CD4-positive, alpha-beta T cell (primary cell): ENCODE measurements at regions of chr19 and their contacts with region 1.

Region 1: GRCh38 chr19:28466107-28467045 is 746.6 kb downstream of the UQCRFS1 start:
- DNase-seq: peak; percentile 28 to 74 (median 49)
- ATAC-seq: no peak
- H3K4me3 ChIP-seq: no peak overlapping the region
- H3K4me3 Mint-ChIP-seq: no peak overlapping the region
- H3K27ac ChIP-seq: no peak overlapping the region
- H3K27ac Mint-ChIP-seq: no peak overlapping the region
- H3K4me1 ChIP-seq: peaks cover 5% of the 10 kb centered on the region
- H3K4me1 Mint-ChIP-seq: peaks cover 21% of the 10 kb centered on the region
- H3K27me3 ChIP-seq: no peaks in the 10 kb centered on the region
- H3K27me3 Mint-ChIP-seq: no peaks in the 10 kb centered on the region
- CTCF ChIP-seq: peak; percentile 61

Region 2: GRCh38 chr19:27955485-27956480 is 510.6 kb before region 1 on chr19:
- CTCF ChIA-PET with region 1: no interaction called
- POLR2A ChIA-PET with region 1: no interaction called
- intact Hi-C with region 1: no loop called
- DNase-seq: no peak
- ATAC-seq: no peak
- H3K4me3 ChIP-seq: no peak overlapping the region
- H3K4me3 Mint-ChIP-seq: no peak overlapping the region
- H3K27ac ChIP-seq: no peak overlapping the region
- H3K27ac Mint-ChIP-seq: no peak overlapping the region
- H3K4me1 ChIP-seq: no peaks in the 10 kb centered on the region
- H3K4me1 Mint-ChIP-seq: no peaks in the 10 kb centered on the region
- H3K27me3 ChIP-seq: no peaks in the 10 kb centered on the region
- H3K27me3 Mint-ChIP-seq: no peaks in the 10 kb centered on the region
- CTCF ChIP-seq: no peak

Region 3: DNA sequence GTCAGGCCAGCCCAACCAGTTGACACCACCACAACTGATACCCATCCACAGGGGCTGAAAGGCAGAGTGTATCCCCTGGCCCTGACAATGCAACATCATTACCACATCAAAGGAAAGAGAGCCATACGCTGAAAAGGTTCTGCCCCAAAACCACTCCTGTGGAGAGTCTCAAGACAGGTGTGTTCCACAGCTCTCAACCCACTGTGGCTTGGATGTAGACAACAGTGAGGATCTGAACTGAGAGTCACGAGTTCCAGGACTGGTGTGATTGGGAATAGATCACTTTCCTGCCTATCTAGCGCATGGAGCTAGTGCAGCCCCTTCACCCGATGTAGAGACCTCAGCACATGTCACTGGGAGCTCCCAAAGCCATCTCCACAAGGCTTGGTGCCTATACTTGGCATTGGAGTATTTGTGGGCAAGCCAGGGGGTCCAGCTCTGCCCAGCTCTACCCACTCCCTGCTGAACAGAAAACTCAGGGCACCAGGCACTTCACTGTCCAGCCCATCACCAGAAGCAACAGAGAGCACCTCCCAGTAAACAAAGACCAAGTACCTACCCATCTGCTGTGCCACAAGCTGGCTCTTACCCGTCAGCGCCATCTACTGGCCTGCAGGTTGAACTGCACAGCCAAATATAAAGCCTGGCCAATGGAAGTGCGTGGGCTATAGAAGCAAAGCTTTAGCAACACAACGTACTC is 167.1 kb after region 1 on chr19:
- CTCF ChIA-PET with region 1: no interaction called
- POLR2A ChIA-PET with region 1: no interaction called
- intact Hi-C with region 1: loop called (anchors 1 to 2 kb)
- DNase-seq: peak in 11 of 14 experiments; percentile 3 to 60 (median 33)
- ATAC-seq: peak; percentile 34
- H3K4me3 ChIP-seq: no peak overlapping the region
- H3K4me3 Mint-ChIP-seq: no peak overlapping the region
- H3K27ac ChIP-seq: no peak overlapping the region
- H3K27ac Mint-ChIP-seq: no peak overlapping the region
- H3K4me1 ChIP-seq: no peaks in the 10 kb centered on the region
- H3K4me1 Mint-ChIP-seq: no peaks in the 10 kb centered on the region
- H3K27me3 ChIP-seq: no peaks in the 10 kb centered on the region
- H3K27me3 Mint-ChIP-seq: no peaks in the 10 kb centered on the region
- CTCF ChIP-seq: peak; percentile 66

Region 4: GRCh38 chr19:28710278-28710677 is 243.9 kb after region 1 on chr19:
- CTCF ChIA-PET with region 1: no interaction called
- POLR2A ChIA-PET with region 1: no interaction called
- intact Hi-C with region 1: loop called (anchors 1 kb)
- DNase-seq: peak in 3 of 14 experiments; percentile 56 to 69 (median 65)
- ATAC-seq: no peak
- H3K4me3 ChIP-seq: no peak overlapping the region
- H3K4me3 Mint-ChIP-seq: no peak overlapping the region
- H3K27ac ChIP-seq: no peak overlapping the region
- H3K27ac Mint-ChIP-seq: no peak overlapping the region
- H3K4me1 ChIP-seq: no peaks in the 10 kb centered on the region
- H3K4me1 Mint-ChIP-seq: no peaks in the 10 kb centered on the region
- H3K27me3 ChIP-seq: no peaks in the 10 kb centered on the region
- H3K27me3 Mint-ChIP-seq: peaks cover 9% of the 10 kb centered on the region
- CTCF ChIP-seq: peak; percentile 64

Region 5: DNA sequence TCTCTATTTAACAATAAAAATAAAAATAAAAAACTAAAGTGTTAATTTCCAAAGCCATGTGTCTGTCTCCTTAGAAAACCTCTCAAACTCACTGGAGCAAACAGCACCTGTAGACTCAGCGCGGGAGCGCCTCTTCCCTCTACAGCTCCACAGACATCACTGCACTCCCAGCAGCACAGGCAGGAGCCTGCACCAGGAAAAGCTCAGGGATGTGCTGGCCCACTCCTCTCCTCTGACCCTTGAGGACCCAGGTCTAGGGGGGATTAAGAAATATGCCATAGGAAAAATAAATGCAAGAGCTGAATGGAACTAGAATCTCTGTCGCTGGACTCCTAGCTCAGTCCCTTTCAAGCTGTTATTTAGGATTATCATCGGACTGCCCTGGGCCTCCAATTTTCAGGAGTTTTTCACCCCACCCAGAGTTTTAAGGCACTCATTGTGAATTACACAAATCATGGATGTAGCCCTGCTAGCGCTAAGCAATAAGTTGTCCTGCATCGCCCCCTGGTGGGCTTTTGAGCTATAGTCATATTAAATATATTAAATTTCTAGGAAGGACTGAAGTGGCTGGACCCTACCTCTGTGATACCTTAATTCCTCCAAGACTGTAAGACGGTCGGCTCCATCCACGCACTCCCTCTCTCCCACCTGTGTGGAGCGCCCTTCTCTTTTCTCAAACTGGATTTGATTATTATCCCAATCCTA is 412.6 kb after region 1 on chr19:
- CTCF ChIA-PET with region 1: no interaction called
- POLR2A ChIA-PET with region 1: interaction called, 3 read pairs
- intact Hi-C with region 1: loop called (anchors 2 to 5 kb)
- DNase-seq: peak; percentile 8 to 70 (median 39)
- ATAC-seq: no peak
- H3K4me3 ChIP-seq: no peak overlapping the region
- H3K4me3 Mint-ChIP-seq: no peak overlapping the region
- H3K27ac ChIP-seq: no peak overlapping the region
- H3K27ac Mint-ChIP-seq: no peak overlapping the region
- H3K4me1 ChIP-seq: no peaks in the 10 kb centered on the region
- H3K4me1 Mint-ChIP-seq: no peaks in the 10 kb centered on the region
- H3K27me3 ChIP-seq: no peaks in the 10 kb centered on the region
- H3K27me3 Mint-ChIP-seq: peaks cover 15% of the 10 kb centered on the region
- CTCF ChIP-seq: peak; percentile 61

Region 6: DNA sequence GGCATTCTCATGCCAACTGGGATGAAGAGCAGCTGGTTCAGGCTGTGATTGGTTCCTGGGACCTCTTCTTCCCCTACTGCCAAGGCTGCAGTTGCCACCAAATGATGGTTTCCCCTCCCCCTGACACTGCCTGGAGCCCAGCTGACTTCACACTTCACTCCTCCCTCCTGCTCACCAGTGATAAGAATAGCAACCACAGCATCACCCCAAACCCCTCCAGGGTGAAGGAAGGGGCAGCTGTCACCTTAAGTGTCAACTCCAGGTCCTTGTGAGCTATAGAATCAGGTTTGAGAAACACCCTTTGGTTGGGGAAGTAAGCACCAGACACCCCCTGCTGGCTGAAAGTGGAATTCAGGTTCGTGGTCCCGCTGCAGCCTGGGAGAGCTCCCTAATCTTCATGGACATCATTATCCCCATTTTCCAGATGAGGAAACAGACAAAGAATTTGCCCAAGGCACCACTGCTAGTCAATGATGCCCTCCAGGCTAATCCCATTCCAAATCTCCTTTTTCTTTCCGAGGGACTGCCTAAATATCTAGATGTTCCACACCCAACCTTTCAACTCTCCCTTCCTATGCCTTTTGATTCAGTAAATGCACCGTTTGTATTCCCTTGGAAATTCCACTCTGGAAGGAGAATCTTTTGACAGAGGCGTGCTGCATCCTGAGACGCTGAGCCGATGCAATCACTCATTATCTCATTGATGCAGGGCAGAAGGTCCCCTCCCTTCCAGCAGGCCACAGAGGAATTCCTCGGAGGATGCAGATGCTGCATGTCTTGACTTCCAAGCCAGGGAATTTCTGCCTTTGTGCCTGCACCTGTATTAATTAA is 797.1 kb after region 1 on chr19:
- CTCF ChIA-PET with region 1: no interaction called
- POLR2A ChIA-PET with region 1: no interaction called
- intact Hi-C with region 1: loop called in 1 of 2 experiments (anchors 5 kb)
- DNase-seq: peak; percentile 13 to 67 (median 44)
- ATAC-seq: peak; percentile 41
- H3K4me3 ChIP-seq: no peak overlapping the region
- H3K4me3 Mint-ChIP-seq: no peak overlapping the region
- H3K27ac ChIP-seq: no peak overlapping the region
- H3K27ac Mint-ChIP-seq: no peak overlapping the region
- H3K4me1 ChIP-seq: no peaks in the 10 kb centered on the region
- H3K4me1 Mint-ChIP-seq: no peaks in the 10 kb centered on the region
- H3K27me3 ChIP-seq: peaks cover 0 to 3% of the 10 kb centered on the region in 2 experiments
- H3K27me3 Mint-ChIP-seq: peaks cover 36% of the 10 kb centered on the region
- CTCF ChIP-seq: peak; percentile 79

Region 7: DNA sequence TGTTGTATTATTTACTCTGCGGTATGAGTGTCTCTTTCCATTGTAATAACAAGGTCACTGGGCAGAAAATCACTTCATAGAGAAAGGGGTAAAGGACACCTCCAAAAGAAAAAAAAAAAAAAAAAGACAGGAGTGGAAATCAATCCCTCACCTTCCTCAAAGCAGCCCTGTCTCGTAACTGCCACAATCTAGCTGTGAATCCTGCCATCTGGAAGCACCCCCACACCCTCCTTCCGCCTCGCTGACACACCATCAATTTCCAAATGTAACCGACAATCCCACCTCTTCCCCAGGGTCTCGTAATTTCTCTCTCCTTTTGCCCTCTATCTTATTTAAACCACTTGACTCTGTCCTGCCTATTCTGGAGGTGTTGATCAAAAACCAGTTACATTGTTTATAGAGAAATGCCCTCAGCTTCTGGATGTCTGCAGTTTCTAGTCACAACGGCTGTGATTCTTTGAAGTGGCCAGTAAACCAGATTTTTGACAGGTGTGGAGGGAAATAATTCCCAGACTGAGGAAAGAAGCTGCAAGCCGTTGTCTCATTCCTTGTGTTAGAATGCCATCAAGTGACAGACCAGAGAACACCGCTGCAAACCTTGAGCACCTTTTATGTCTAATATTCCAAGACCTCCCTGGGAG is 1130.6 kb after region 1 on chr19:
- CTCF ChIA-PET with region 1: no interaction called
- POLR2A ChIA-PET with region 1: no interaction called
- intact Hi-C with region 1: loop called (anchors 5 kb)
- DNase-seq: peak in 2 of 14 experiments; percentile 4 to 14
- ATAC-seq: no peak
- H3K4me3 ChIP-seq: no peak overlapping the region
- H3K4me3 Mint-ChIP-seq: no peak overlapping the region
- H3K27ac ChIP-seq: no peak overlapping the region
- H3K27ac Mint-ChIP-seq: no peak overlapping the region
- H3K4me1 ChIP-seq: no peaks in the 10 kb centered on the region
- H3K4me1 Mint-ChIP-seq: no peaks in the 10 kb centered on the region
- H3K27me3 ChIP-seq: peaks cover 3 to 10% of the 10 kb centered on the region in 2 experiments
- H3K27me3 Mint-ChIP-seq: peaks cover 33% of the 10 kb centered on the region
- CTCF ChIP-seq: peak; percentile 36